MCF 10A (cell line): ENCODE measurements at regions of chr1 and their contacts with region 1.

Region 1: DNA sequence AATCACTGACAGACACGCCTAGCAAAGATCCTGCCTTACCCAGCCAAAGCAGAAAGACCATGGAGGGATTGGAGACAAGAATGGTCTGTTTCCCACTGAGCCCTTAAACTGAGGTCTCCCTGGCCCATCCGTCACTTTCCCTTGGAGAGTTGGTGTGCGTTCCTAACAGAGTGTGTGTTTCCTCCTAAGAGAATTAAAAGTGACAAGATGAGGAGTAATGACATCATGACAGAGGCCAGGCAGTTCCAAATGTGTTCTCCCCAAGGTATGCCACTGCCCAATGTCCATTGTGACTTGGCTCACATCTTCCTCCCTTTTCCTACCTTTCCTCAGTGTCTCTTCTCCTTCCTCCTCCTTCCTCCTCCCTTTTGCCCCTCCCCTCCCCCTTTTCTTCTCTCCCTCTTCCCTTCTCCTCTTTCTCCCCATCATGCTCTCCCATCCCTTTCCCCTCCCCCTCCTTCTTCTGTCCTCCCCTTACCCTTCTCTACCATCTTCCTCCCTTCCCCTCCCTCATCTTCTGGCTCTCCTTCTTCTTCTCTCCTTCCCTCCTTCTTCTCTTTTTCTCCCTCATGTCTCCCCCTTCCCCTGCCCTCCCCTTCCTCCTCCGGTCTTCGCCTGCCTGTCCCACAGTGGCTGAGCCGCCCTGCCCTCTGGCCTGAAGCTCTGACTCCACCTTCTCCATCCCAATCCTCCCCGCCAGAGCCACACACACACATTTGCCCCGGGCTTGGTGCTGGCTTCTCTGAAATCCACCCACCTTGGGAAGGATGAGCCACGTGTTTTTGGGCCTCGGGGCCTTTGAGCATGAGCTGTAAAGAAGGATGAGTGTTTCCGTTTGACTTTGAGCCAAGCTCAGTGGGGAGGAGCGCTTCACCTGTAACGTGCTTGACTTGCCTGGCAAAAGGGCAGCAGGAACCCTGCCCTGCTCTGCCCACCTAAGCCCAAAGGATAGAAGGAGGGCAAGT is 295.4 kb downstream of the SIPA1L2 start:
- DNase-seq: peak; percentile 99
- H3K4me3 Mint-ChIP-seq: no peak overlapping the region
- H3K27ac Mint-ChIP-seq: no peak overlapping the region
- H3K4me1 Mint-ChIP-seq: peaks cover 26% of the 10 kb centered on the region
- H3K27me3 Mint-ChIP-seq: peaks cover 18% of the 10 kb centered on the region
- CTCF ChIP-seq: no peak

Region 2: GRCh38 chr1:232319072-232319471 is 15.5 kb before region 1 on chr1:
- CTCF ChIA-PET with region 1: interaction called, 14 read pairs
- POLR2A ChIA-PET with region 1: interaction called, 16 read pairs
- intact Hi-C with region 1: no loop called
- DNase-seq: peak; percentile 74
- H3K4me3 Mint-ChIP-seq: no peak overlapping the region
- H3K27ac Mint-ChIP-seq: no peak overlapping the region
- H3K4me1 Mint-ChIP-seq: peaks cover 25% of the 10 kb centered on the region
- H3K27me3 Mint-ChIP-seq: no peaks in the 10 kb centered on the region
- CTCF ChIP-seq: no peak

Region 3: DNA sequence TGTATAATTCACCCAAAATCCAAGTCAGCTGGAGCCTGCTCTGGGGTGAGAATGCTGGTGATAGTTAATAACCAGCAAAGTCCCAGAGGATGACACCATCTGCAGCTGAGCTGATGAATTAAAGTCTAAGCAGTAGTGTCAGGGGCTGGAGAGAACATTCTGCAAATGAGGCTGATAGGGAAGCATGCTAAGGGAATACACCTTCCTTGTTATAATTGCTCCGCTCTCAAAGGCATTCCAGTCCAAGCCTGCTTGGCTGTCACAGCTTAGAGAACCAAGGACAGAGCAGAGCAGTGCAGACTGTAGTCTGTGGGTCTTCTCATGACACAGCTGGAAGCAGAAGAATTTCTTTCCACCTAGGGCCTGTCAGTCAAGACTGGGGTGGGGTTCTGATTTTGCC is 12.3 kb after region 1 on chr1:
- CTCF ChIA-PET with region 1: interaction called, 3 read pairs
- POLR2A ChIA-PET with region 1: interaction called, 10 read pairs
- intact Hi-C with region 1: no loop called
- DNase-seq: no peak
- H3K4me3 Mint-ChIP-seq: no peak overlapping the region
- H3K27ac Mint-ChIP-seq: no peak overlapping the region
- H3K4me1 Mint-ChIP-seq: no peaks in the 10 kb centered on the region
- H3K27me3 Mint-ChIP-seq: no peaks in the 10 kb centered on the region
- CTCF ChIP-seq: no peak